ENCODE measurements at regions of chr11 and their contacts with region 1.

Region 1: DNA sequence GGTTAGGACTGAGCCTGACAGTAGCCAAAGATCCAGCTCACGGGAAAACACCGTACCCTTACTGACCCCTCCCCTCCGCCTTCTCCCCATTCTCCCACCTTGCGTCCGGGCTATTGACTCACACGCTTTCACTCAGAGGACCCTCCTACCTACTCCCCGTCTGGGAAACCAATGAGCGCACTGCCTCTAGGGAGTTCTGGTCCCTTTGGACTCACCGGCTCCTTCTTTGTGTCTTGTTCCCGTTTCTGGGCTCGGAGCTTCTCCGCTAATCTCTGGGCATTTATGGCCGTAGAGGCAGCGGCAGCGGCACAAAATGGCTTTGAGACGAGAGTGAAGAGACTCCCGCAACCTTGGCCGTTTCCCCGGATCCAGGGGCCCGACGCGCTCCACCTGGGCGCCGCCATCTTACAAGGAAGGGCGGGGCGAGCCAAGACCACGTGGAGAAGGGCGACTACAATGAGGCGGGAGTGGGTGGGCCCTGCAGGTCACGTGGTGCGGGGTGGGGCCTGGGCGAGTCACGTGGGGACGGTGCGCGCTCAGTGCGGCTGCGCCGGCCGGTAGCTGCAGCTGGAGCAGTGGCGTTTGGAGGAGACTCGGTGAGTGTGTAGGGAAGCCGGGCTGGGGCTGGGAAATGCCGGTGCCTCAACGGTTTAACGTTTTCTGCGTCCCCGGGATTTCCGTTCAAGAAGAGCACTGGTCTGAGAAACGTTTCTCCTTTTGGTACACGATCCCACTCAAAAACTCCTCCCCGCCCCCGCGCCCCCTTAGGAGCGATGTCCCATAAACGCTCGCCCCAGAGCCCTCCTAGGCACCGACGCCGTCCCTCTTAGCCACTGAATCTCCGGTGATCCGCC is at the starts of genes FAM118B and RPUSD4:
- DNase-seq: peak; percentile 93
- total RNA-seq, gene FAM118B: 22.8 and 29.9 TPM in 2 replicates
- total RNA-seq, gene RPUSD4: 23.3 and 23.6 TPM in 2 replicates

Region 2: GRCh38 chr11:125532668-125533067 is 678.8 kb before region 1 on chr11:
- in situ Hi-C with region 1: no loop called
- DNase-seq: no peak

Region 3: DNA sequence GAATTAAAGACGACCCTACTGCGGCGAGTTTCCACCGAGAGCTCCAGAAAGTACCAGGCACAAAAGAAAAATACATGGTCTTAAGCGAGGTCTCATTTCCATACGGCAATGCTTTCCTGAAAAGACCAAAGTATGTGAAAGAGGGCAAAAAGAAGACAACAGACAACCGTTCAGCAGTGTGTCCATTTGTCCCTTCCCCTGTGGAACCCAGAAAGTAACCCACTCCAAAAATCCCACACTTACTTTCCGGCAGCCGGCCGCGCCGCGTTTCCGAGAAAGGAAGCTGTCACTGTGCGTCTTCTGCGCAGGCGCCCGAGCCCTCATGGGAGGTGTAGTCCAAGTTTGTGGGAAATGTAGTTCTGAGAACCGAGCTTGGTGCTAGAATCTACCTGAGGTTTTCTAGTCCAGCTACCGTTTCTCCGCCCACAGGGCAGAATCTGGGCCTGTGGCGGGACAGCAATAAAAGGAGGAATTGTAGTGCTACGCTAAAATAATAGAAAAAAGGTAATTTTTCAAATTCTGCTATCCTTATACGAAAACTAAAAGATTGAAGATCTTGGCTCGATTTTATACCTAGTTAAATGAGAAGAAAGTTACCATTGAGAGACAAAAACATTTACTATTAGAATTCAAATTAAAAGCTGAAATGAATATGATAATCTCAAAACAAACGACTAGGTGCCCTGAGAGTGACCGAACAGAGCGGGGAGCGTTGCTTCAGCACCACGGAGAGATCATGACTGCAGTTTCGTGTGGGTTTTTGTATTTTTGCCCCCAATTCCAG is 308.3 kb before region 1 on chr11 and contains the start of gene PUS3:
- in situ Hi-C with region 1: loop called (anchors 25 kb)
- DNase-seq: peak; percentile 84
- total RNA-seq, gene PUS3: 15.5 and 15.6 TPM in 2 replicates

Measured in SK-MEL-5 (cell line).